OCI-LY7 (cell line): ENCODE measurements at regions of chr6 and their contacts with region 1.

Region 1: GRCh38 chr6:82247634-82248232 is at the start of gene IBTK:
- DNase-seq: peak; percentile 91
- H3K4me3 ChIP-seq: peak within 1 kb of the TSS; percentile 86
- H3K27ac ChIP-seq: peak within 1 kb of the TSS; percentile 40
- H3K4me1 ChIP-seq: peaks cover 26% of the 10 kb centered on the region
- CTCF ChIP-seq: no peak
- total RNA-seq, gene IBTK: 16.6 and 18.6 TPM in 2 replicates

Region 2: GRCh38 chr6:81515562-81516453 is 731.9 kb before region 1 on chr6:
- CTCF ChIA-PET with region 1: no interaction called
- POLR2A ChIA-PET with region 1: no interaction called
- intact Hi-C with region 1: no loop called
- DNase-seq: no peak
- H3K4me3 ChIP-seq: no peak overlapping the region
- H3K27ac ChIP-seq: no peak overlapping the region
- H3K4me1 ChIP-seq: no peaks in the 10 kb centered on the region
- CTCF ChIP-seq: no peak

Region 3: GRCh38 chr6:81844686-81845085 is 403.0 kb before region 1 on chr6:
- CTCF ChIA-PET with region 1: no interaction called
- POLR2A ChIA-PET with region 1: no interaction called
- intact Hi-C with region 1: no loop called
- DNase-seq: no peak
- H3K4me3 ChIP-seq: no peak overlapping the region
- H3K27ac ChIP-seq: no peak overlapping the region
- H3K4me1 ChIP-seq: no peaks in the 10 kb centered on the region
- CTCF ChIP-seq: no peak

Region 4: DNA sequence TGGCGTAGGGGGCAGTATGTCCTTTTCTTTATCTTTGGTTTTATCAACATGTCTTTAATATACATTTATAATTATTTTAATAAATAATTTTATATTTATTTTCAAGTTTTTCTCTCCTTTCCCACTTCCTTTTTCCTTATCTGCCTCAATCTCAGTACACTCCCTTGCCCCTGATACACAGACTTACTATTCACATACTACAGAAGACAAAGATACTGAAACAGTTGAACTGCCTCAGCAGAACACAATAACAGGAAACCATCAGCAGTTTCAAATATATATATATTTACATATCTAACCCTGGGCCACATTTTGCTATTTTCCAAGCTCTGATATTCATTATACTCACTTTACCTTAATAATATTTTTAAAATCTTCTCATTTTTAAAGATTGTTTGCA is 20.0 kb before region 1 on chr6:
- CTCF ChIA-PET with region 1: no interaction called
- POLR2A ChIA-PET with region 1: interaction called, 4 read pairs
- intact Hi-C with region 1: loop called (anchors 2 kb)
- DNase-seq: peak; percentile 59
- H3K4me3 ChIP-seq: peak overlapping the region; percentile 8
- H3K27ac ChIP-seq: peak overlapping the region; percentile 63
- H3K4me1 ChIP-seq: peaks cover 20% of the 10 kb centered on the region
- CTCF ChIP-seq: no peak

Region 5: DNA sequence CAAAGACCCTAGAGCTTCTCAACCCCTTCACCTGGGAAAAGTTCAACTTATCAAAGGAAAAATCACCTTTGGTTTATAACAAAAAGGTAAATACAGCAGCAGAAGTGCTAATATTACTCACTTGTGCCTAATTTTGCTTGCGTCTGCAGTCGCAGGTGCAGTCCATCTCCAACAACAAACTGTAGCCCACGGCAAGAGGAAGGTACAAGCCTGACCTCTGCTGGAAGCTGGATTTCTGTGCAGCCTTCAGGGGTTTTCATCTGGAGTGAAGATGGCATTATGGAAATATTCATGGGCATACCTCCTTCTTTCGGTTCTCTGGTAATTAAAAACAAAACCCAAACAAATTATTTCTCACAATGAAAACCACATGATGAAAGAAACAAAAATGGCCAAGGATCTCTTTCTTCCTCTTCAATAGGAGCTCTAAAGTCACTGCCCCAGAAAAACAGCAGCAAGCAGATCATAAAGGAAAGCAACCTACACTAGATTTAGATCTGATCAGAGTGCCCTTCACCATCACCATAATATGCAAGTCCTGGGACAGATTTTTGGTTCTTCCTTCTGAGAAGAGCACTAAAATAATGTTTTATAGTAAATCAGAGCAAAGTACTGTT is 810.1 kb after region 1 on chr6:
- CTCF ChIA-PET with region 1: no interaction called
- POLR2A ChIA-PET with region 1: no interaction called
- intact Hi-C with region 1: loop called (anchors 5 kb)
- DNase-seq: peak; percentile 67
- H3K4me3 ChIP-seq: no peak overlapping the region
- H3K27ac ChIP-seq: no peak overlapping the region
- H3K4me1 ChIP-seq: peaks cover 7% of the 10 kb centered on the region
- CTCF ChIP-seq: peak; percentile 87

Region 6: GRCh38 chr6:83192871-83193746 is 945.4 kb after region 1 on chr6 and contains the starts of genes PGM3 and RWDD2A:
- CTCF ChIA-PET with region 1: no interaction called
- POLR2A ChIA-PET with region 1: no interaction called
- intact Hi-C with region 1: loop called (anchors 5 kb)
- DNase-seq: peak; percentile 92
- H3K4me3 ChIP-seq: peak within 1 kb of the TSS; percentile 94
- H3K27ac ChIP-seq: no peak within 1 kb of the TSS
- H3K4me1 ChIP-seq: peaks cover 11% of the 10 kb centered on the region
- CTCF ChIP-seq: no peak
- total RNA-seq, gene PGM3: 17.5 and 18.6 TPM in 2 replicates
- total RNA-seq, gene RWDD2A: 2.2 and 2.9 TPM in 2 replicates

Region 7: GRCh38 chr6:83215131-83216047 is 967.7 kb after region 1 on chr6:
- CTCF ChIA-PET with region 1: no interaction called
- POLR2A ChIA-PET with region 1: no interaction called
- intact Hi-C with region 1: loop called (anchors 10 kb)
- DNase-seq: peak; percentile 81
- H3K4me3 ChIP-seq: no peak overlapping the region
- H3K27ac ChIP-seq: no peak overlapping the region
- H3K4me1 ChIP-seq: no peaks in the 10 kb centered on the region
- CTCF ChIP-seq: peak; percentile 94